ENCODE measurements at regions of chr15 and their contacts with region 1.

Region 1: GRCh38 chr15:42065033-42065432 is 29.3 kb downstream of the PLA2G4D start:
- DNase-seq: no peak
- ATAC-seq: no peak
- H3K4me3 Mint-ChIP-seq: no peak overlapping the region
- H3K27ac Mint-ChIP-seq: no peak overlapping the region
- H3K4me1 Mint-ChIP-seq: no peaks in the 10 kb centered on the region
- H3K27me3 Mint-ChIP-seq: peaks cover 13% of the 10 kb centered on the region
- CTCF ChIP-seq: no peak

Region 2: DNA sequence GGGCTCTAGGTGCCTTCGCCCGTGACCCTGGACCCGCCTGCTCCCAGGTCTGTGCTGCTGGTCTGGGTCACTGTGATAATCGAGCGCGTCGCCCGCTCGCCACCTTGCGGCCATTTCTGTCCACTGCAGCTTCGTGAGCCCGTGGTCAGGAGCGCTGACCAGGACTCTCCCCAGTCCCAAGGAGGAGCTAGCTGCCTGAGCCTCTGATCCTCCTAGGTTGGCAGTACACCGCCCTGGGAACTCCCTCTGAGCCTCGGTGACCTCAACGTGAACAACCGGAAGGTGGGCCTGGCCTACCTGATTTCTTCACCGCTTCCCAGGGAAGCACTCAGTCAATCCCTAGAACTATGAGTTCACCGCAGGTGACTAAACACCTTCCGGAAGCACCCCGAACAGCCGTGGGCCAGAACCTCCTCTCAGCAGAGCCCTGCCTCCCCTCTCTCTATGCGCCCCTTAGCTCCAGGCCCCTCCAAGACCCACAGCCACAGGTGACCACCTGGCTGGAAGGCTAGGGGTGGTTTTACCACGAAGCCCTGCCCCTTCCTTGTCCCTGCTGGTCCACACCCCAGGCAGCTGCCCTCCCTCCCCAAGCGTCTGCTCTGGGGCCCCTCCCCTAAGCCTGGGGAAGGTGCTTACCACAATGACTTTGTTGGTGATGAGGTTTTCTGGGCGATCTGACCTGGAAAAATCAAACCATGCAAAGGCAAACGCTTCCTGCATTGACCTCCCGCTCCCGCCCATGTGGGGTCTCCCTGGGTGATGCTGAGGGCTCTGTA is 19.6 kb after region 1 on chr15:
- CTCF ChIA-PET with region 1: interaction called, 10 read pairs
- POLR2A ChIA-PET with region 1: no interaction called
- intact Hi-C with region 1: no loop called
- DNase-seq: peak; percentile 59
- ATAC-seq: peak; percentile 90
- H3K4me3 Mint-ChIP-seq: no peak overlapping the region
- H3K27ac Mint-ChIP-seq: no peak overlapping the region
- H3K4me1 Mint-ChIP-seq: peaks cover 3% of the 10 kb centered on the region
- H3K27me3 Mint-ChIP-seq: peaks cover 7% of the 10 kb centered on the region
- CTCF ChIP-seq: peak; percentile 95

Region 3: GRCh38 chr15:42137431-42138261 is 72.6 kb after region 1 on chr15:
- CTCF ChIA-PET with region 1: interaction called, 14 read pairs
- POLR2A ChIA-PET with region 1: no interaction called
- intact Hi-C with region 1: loop called (anchors 10 kb)
- DNase-seq: peak; percentile 41
- ATAC-seq: no peak
- H3K4me3 Mint-ChIP-seq: no peak overlapping the region
- H3K27ac Mint-ChIP-seq: no peak overlapping the region
- H3K4me1 Mint-ChIP-seq: no peaks in the 10 kb centered on the region
- H3K27me3 Mint-ChIP-seq: no peaks in the 10 kb centered on the region
- CTCF ChIP-seq: peak; percentile 73

Measured in activated CD8-positive, alpha-beta T cell treated with anti-CD3 and anti-CD28 coated beads for 36 hours (primary cell).